CD8-positive, alpha-beta T cell (primary cell): ENCODE measurements at regions of chr7 and their contacts with region 1.

Region 1: DNA sequence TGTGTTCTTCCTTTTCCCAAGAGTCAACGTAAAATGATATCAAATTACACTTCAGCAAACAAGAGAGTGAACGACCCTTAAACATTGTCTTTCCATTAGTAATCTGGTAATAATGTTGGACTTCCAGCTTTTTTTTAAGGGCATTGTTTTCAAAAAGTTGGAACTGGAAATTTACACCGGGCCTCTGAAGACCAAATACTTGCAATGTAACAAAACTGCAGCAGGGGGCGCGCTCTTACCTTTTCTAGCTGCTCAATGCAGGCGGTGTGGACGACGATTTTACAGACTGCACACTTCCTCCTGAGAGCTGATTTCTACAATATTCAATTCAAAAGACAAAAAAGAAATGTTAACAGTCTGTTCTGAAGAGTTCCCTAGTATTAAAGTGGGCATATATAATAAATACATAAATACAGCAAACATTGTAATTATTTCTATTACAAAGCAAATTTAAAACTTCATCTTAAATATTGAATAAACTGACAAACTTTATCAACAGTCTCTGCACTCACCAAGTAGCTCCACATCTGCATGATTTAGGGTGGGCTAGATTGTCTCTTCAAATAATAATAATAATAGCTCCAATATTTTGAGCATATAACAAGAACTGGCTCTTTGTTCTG is 190.4 kb downstream of the DGKI start:
- DNase-seq: peak in 8 of 9 experiments; percentile 29 to 56 (median 48)
- ATAC-seq: no peak
- H3K4me3 ChIP-seq: no peak overlapping the region
- H3K4me3 Mint-ChIP-seq: no peak overlapping the region
- H3K27ac ChIP-seq: no peak overlapping the region
- H3K27ac Mint-ChIP-seq: no peak overlapping the region
- H3K4me1 ChIP-seq: no peaks in the 10 kb centered on the region
- H3K4me1 Mint-ChIP-seq: no peaks in the 10 kb centered on the region
- H3K27me3 ChIP-seq: no peaks in the 10 kb centered on the region
- H3K27me3 Mint-ChIP-seq: peaks cover 8% of the 10 kb centered on the region
- CTCF ChIP-seq: peak; percentile 83

Region 2: GRCh38 chr7:137670199-137671071 is 14.1 kb after region 1 on chr7:
- CTCF ChIA-PET with region 1: interaction called, 10 read pairs
- POLR2A ChIA-PET with region 1: no interaction called
- intact Hi-C with region 1: no loop called
- DNase-seq: no peak
- ATAC-seq: no peak
- H3K4me3 ChIP-seq: no peak overlapping the region
- H3K4me3 Mint-ChIP-seq: no peak overlapping the region
- H3K27ac ChIP-seq: no peak overlapping the region
- H3K27ac Mint-ChIP-seq: no peak overlapping the region
- H3K4me1 ChIP-seq: no peaks in the 10 kb centered on the region
- H3K4me1 Mint-ChIP-seq: no peaks in the 10 kb centered on the region
- H3K27me3 ChIP-seq: no peaks in the 10 kb centered on the region
- H3K27me3 Mint-ChIP-seq: peaks cover 5% of the 10 kb centered on the region
- CTCF ChIP-seq: no peak

Region 3: GRCh38 chr7:138015096-138015495 is 358.8 kb after region 1 on chr7:
- CTCF ChIA-PET with region 1: interaction called, 3 read pairs
- POLR2A ChIA-PET with region 1: no interaction called
- intact Hi-C with region 1: loop called in 1 of 2 experiments (anchors 2 kb)
- DNase-seq: no peak
- ATAC-seq: no peak
- H3K4me3 ChIP-seq: no peak overlapping the region
- H3K4me3 Mint-ChIP-seq: no peak overlapping the region
- H3K27ac ChIP-seq: no peak overlapping the region
- H3K27ac Mint-ChIP-seq: no peak overlapping the region
- H3K4me1 ChIP-seq: no peaks in the 10 kb centered on the region
- H3K4me1 Mint-ChIP-seq: no peaks in the 10 kb centered on the region
- H3K27me3 ChIP-seq: no peaks in the 10 kb centered on the region
- H3K27me3 Mint-ChIP-seq: no peaks in the 10 kb centered on the region
- CTCF ChIP-seq: no peak